Caco-2 (cell line): ENCODE measurements at regions of chr6 and their contacts with region 1.

Region 1: GRCh38 chr6:158242071-158242606 is 70.1 kb upstream of the TULP4 start:
- DNase-seq: no peak
- H3K4me3 ChIP-seq: no peak overlapping the region
- H3K4me3 Mint-ChIP-seq: peak overlapping the region; percentile 17
- H3K27ac Mint-ChIP-seq: peak overlapping the region; percentile 84
- H3K4me1 ChIP-seq: peaks cover 28% of the 10 kb centered on the region
- H3K4me1 Mint-ChIP-seq: peaks cover 18% of the 10 kb centered on the region
- H3K27me3 ChIP-seq: no peaks in the 10 kb centered on the region
- H3K27me3 Mint-ChIP-seq: no peaks in the 10 kb centered on the region
- CTCF ChIP-seq: no peak

Region 2: GRCh38 chr6:158286413-158286812 is 44.3 kb after region 1 on chr6:
- CTCF ChIA-PET with region 1: no interaction called
- POLR2A ChIA-PET with region 1: no interaction called
- intact Hi-C with region 1: loop called (anchors 5 kb)
- DNase-seq: no peak
- H3K4me3 ChIP-seq: no peak overlapping the region
- H3K4me3 Mint-ChIP-seq: no peak overlapping the region
- H3K27ac Mint-ChIP-seq: no peak overlapping the region
- H3K4me1 ChIP-seq: peaks cover 11% of the 10 kb centered on the region; the same call in 1 of the 2 replicates
- H3K4me1 Mint-ChIP-seq: peaks cover 31% of the 10 kb centered on the region
- H3K27me3 ChIP-seq: no peaks in the 10 kb centered on the region
- H3K27me3 Mint-ChIP-seq: no peaks in the 10 kb centered on the region
- CTCF ChIP-seq: no peak

Region 3: GRCh38 chr6:158591134-158591809 is 349.1 kb after region 1 on chr6:
- CTCF ChIA-PET with region 1: no interaction called
- POLR2A ChIA-PET with region 1: no interaction called
- intact Hi-C with region 1: no loop called
- DNase-seq: no peak
- H3K4me3 ChIP-seq: no peak overlapping the region
- H3K4me3 Mint-ChIP-seq: no peak overlapping the region
- H3K27ac Mint-ChIP-seq: no peak overlapping the region
- H3K4me1 ChIP-seq: no peaks in the 10 kb centered on the region
- H3K4me1 Mint-ChIP-seq: no peaks in the 10 kb centered on the region
- H3K27me3 ChIP-seq: no peaks in the 10 kb centered on the region
- H3K27me3 Mint-ChIP-seq: no peaks in the 10 kb centered on the region
- CTCF ChIP-seq: no peak